Activated naive CD8-positive, alpha-beta T cell treated with anti-CD3 and anti-CD28 coated beads, Interleukin-2, amount 10 ng/mL, durations not matched to agents 7 days and 5 days (primary cell): ENCODE measurements at regions of chr18 and their contacts with region 1.

Region 1: GRCh38 chr18:9082711-9083510 is 19.6 kb upstream of the NDUFV2 start:
- DNase-seq: no peak
- ATAC-seq: peak; percentile 84
- H3K4me3 Mint-ChIP-seq: peak overlapping the region; percentile 76
- H3K27ac Mint-ChIP-seq: peak overlapping the region; percentile 93
- H3K4me1 Mint-ChIP-seq: peaks cover 30% of the 10 kb centered on the region
- H3K27me3 Mint-ChIP-seq: no peaks in the 10 kb centered on the region

Region 2: GRCh38 chr18:9102508-9103375 is 19.8 kb after region 1 on chr18 and contains the start of gene NDUFV2:
- POLR2A ChIA-PET with region 1: interaction called, 211 read pairs
- DNase-seq: peak; percentile 99
- ATAC-seq: peak; percentile 91
- H3K4me3 Mint-ChIP-seq: peak within 1 kb of the TSS; percentile 99
- H3K27ac Mint-ChIP-seq: peak within 1 kb of the TSS; percentile 98
- H3K4me1 Mint-ChIP-seq: peaks cover 48% of the 10 kb centered on the region
- H3K27me3 Mint-ChIP-seq: no peaks in the 10 kb centered on the region
- total RNA-seq, gene NDUFV2: 166 to 168 TPM

Region 3: GRCh38 chr18:9109523-9109922 is 26.6 kb after region 1 on chr18:
- POLR2A ChIA-PET with region 1: interaction called, 211 read pairs
- DNase-seq: no peak
- ATAC-seq: no peak
- H3K4me3 Mint-ChIP-seq: peak overlapping the region; percentile 54
- H3K27ac Mint-ChIP-seq: peak overlapping the region; percentile 71
- H3K4me1 Mint-ChIP-seq: peaks cover 66% of the 10 kb centered on the region
- H3K27me3 Mint-ChIP-seq: no peaks in the 10 kb centered on the region

Region 4: GRCh38 chr18:9117980-9118841 is 35.3 kb after region 1 on chr18:
- POLR2A ChIA-PET with region 1: interaction called, 13 read pairs
- DNase-seq: no peak
- ATAC-seq: peak; percentile 46
- H3K4me3 Mint-ChIP-seq: peak overlapping the region; percentile 71
- H3K27ac Mint-ChIP-seq: peak overlapping the region; percentile 91
- H3K4me1 Mint-ChIP-seq: peaks cover 50% of the 10 kb centered on the region
- H3K27me3 Mint-ChIP-seq: no peaks in the 10 kb centered on the region